Sigmoid colon (tissue), 7 donors: ENCODE measurements at regions of chr12 and their contacts with region 1.

Region 1: DNA sequence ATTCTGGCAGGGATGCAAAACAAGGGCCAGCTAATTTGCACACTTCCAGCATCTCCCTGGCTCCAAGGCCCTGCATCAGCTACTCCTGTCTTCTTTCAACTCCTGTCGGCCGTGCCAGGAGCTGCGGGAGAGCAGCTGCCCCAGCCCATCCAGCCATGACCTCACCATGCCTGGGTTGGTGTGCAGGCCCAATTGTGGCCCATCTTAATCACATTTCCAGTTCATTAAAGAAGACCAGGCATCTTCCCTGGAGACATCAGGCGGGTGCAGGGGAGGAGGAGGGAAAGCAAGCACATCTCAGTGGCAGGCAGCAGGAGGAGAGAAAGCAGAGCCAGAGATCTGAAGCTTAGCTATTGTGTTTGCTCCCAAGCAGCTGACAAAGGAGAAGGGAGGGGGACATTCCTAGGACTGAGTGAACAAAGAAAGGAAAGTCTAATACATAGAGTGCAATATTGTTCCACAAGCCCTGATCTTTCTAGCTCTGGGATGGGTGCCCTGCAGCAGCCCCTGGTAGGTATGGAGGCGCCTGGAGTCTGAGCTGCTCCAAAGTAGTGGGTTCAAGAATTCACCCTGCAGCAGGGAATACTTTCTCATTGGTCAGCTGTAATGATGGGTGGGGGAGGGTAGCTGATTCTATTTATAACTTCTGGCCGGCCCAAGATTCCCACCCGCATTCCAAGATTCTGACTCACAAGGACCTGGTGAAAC is 40.1 kb downstream of the VWF start:
- DNase-seq: peak; percentile 83
- H3K4me3 ChIP-seq: no peak overlapping the region
- H3K27ac ChIP-seq: peak overlapping the region; percentile 59 to 83 (median 75)
- H3K4me1 ChIP-seq: peaks cover 0 to 48% (median 36%) of the 10 kb centered on the region in 4 donors
- H3K27me3 ChIP-seq: no peaks in the 10 kb centered on the region
- CTCF ChIP-seq: no peak
- EP300 ChIP-seq: peak in 2 of 4 donors; percentile 53 to 73
- POLR2A ChIP-seq: no peak

Region 2: DNA sequence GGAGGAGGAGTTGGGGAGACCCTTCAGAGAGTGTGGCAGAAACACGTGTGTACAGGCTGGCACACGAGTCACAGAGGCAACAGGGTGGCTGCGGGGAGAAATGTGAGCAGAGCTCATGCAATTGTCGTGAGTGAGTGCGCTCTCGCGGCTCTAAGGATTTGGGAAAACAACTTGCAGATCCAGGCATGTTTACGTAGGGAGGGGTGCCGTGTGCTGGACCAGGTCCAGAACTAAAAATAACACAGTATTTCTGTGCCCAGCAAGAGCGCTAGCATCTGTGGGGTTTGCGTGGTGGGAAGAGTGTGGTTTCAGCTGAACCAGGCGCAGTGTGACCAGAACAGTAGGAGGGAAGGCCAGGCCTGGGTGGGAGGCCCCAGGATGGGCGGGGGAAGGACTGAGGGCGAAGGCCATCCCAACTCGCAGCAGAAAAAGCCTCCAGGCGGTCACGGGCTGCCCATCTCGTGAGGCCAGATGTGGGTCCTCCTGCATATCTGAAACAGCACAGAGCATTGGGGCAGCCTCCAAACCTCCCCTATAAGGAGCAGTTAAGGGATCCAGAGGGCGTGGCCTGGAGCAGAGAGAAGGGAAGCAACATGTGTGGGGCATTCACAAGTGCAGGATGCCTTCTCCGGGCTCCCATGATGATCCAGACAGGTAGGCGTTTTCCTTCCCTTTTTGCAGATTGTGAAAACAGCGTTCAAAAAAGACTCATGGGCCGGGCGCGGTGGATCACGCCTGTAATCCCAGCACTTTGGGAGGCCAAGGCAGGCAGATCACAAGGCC is 97.9 kb after region 1 on chr12:
- intact Hi-C with region 1: loop called (anchors 5 kb)
- DNase-seq: peak; percentile 91
- H3K4me3 ChIP-seq: peak overlapping the region in 1 of 4 donors; percentile 12
- H3K27ac ChIP-seq: peak overlapping the region; percentile 76 to 88 (median 80)
- H3K4me1 ChIP-seq: peaks cover 0 to 60% (median 45%) of the 10 kb centered on the region in 4 donors
- H3K27me3 ChIP-seq: no peaks in the 10 kb centered on the region
- CTCF ChIP-seq: no peak
- EP300 ChIP-seq: no peak
- POLR2A ChIP-seq: no peak